ENCODE measurements at regions of chr22 and their contacts with region 1.

Region 1: GRCh38 chr22:42090596-42091454 is at the start of gene NDUFA6:
- DNase-seq: peak; percentile 100
- H3K4me3 ChIP-seq: peak within 1 kb of the TSS; percentile 69 to 87 (median 86)
- H3K27ac ChIP-seq: peak within 1 kb of the TSS; percentile 92 to 98 (median 96)
- H3K4me1 ChIP-seq: peaks cover 0 to 33% (median 24%) of the 10 kb centered on the region in 4 donors
- H3K27me3 ChIP-seq: no peaks in the 10 kb centered on the region
- CTCF ChIP-seq: peak; percentile 82 to 98 (median 94)
- EP300 ChIP-seq: no peak
- POLR2A ChIP-seq: peak; percentile 88 to 93
- total RNA-seq, gene NDUFA6: 61.8 to 104 (median 82.6) TPM

Region 2: DNA sequence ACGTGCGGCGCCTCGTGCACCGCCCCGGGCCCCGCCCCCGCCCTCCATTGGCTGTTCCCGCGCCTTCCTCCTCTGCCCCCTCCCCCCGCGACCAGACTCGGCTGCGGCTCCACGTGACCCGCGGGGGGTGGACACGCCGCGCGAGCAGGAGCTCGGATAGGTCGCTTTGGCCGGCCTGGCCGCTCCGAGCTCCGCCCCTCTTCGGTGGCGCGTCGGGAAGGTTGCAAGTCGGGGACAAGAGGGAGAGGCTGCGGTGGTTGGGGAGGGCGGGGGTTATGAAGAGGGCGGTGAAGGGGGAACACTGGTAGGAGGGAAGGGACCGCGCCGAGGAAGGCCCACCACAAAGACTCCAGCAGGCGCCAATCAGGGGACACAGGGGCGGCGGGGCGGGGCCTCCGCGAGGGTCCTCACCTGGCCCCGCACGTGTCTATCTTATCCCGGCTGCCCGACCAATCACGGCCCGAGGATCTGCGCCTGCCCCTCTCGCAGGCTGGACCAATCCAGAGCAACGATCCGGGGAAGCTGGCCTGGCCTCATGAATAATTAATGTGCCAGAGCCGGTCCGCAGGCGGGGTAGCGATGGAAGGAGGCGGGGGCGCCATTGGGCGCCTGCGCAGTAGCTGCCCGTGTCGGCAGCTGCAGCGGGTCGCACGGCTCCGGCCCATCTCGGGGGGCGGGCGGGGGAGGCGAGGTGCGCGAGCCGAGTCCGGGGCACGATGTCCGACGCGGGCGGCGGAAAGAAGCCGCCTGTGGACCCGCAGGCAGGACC is 709.3 kb before region 1 on chr22 and contains the start of gene TEF:
- intact Hi-C with region 1: no loop called
- DNase-seq: peak; percentile 100
- H3K4me3 ChIP-seq: peak within 1 kb of the TSS; percentile 62 to 90 (median 85)
- H3K27ac ChIP-seq: peak within 1 kb of the TSS; percentile 90 to 99 (median 99)
- H3K4me1 ChIP-seq: peaks cover 0 to 36% (median 28%) of the 10 kb centered on the region in 4 donors
- H3K27me3 ChIP-seq: no peaks in the 10 kb centered on the region
- CTCF ChIP-seq: no peak
- EP300 ChIP-seq: peak in 2 of 4 donors; percentile 32 to 44
- POLR2A ChIP-seq: peak; percentile 16 to 57
- total RNA-seq, gene TEF: 21.3 to 30.3 (median 24.8) TPM

Region 3: GRCh38 chr22:41697126-41697775 is 393.6 kb before region 1 on chr22:
- intact Hi-C with region 1: no loop called
- DNase-seq: peak; percentile 95
- H3K4me3 ChIP-seq: peak overlapping the region in 2 of 4 donors; percentile 28 to 31
- H3K27ac ChIP-seq: peak overlapping the region; percentile 4 to 60 (median 37)
- H3K4me1 ChIP-seq: peaks cover 0 to 20% (median 17%) of the 10 kb centered on the region in 4 donors
- H3K27me3 ChIP-seq: no peaks in the 10 kb centered on the region
- CTCF ChIP-seq: peak; percentile 85 to 99 (median 96)
- EP300 ChIP-seq: no peak
- POLR2A ChIP-seq: no peak

Region 4: DNA sequence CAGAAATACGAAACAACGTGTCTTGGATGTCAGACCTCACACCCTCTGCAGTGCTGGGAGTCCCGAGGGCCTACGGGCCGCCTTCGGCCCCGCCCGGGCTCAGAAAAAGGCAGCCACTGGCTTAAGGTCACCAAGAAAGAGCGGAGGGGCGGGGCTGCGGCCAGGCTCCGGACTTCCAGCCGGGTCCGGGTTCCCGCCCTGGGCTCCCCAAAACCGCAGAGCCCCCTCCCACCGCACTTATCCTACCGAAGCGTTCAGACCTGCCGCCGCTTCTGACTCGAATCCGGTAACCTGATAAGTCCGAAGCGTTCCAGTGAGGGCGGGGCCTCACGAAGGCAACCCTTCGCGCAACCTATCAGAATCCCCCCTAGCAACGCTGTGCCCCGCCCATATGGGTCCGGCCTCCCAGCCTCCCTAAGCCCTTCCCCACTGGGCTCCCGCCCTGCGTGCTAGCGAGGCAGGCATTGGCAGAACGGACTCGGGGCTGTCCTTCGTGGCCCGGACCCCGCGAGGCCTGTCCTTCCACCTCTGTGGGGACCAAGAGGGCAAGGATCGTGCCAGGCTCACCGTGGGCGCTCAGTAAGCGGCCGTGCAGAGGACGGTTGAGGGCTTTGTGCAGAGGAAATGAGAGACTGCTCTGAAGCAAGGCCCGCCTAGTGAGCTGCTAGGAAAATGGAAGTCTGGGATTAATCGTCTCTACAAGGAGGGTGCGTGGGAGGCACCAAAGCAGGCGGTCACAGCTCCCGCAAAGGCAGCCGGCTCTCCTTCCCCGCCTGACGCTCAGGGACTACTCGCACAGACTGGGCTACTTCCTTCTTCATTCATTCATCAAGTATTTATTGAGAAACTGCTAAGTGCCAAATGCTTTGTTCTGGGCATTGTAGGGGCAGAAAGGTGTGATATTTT is 20.1 kb before region 1 on chr22 and contains the start of gene NAGA:
- intact Hi-C with region 1: loop called (anchors 1 kb)
- DNase-seq: peak; percentile 98
- H3K4me3 ChIP-seq: peak within 1 kb of the TSS; percentile 52 to 68 (median 62)
- H3K27ac ChIP-seq: peak within 1 kb of the TSS; percentile 88 to 93 (median 90)
- H3K4me1 ChIP-seq: peaks cover 0 to 47% (median 39%) of the 10 kb centered on the region in 4 donors
- H3K27me3 ChIP-seq: no peaks in the 10 kb centered on the region
- CTCF ChIP-seq: no peak
- EP300 ChIP-seq: no peak
- POLR2A ChIP-seq: peak; percentile 73 to 91
- total RNA-seq, gene NAGA: 18.6 to 28.6 (median 21.7) TPM

Region 5: DNA sequence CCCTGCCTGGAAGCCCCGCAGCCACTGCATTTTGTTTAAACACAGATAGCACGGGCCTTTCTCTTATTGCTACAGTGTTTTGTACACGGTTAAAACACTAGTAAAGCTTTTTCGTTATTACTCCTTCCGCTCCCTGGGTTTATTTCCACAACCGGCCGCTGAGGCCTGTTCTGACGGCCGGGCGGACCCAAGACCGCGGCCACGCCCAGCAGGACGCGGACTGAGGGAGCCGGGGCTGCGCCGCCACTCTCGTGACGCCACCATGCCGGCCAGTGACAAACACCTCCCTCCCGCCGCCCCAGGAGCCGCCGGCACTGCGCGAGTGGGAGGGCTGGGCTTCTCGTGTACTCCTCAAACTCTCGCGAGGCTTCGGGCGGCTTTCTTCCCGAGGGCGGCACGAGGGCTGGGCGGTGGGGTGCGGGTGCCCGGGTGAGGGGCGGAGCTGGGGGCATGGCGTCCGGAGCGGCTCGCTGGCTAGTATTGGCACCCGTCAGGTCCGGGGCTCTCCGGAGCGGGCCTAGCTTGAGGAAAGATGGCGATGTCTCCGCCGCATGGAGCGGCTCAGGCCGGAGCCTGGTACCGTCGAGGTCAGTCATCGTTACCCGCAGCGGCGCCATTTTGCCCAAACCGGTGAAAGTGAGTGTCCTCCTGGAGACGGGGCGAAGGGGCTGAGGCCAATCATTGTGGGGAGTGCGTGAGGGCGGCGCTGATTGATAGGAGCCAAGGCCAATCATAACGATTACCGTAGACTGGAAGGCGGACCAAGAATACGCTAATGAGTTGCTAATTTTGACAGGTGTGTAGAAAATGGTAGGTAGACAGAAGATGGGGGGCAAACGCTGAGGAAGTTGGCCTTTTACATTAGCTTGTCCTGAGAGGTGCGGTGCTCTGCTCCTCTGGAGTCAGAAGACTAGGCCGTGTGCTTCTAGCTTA is 11.2 kb before region 1 on chr22 and contains the start of gene SMDT1:
- intact Hi-C with region 1: loop called (anchors 1 kb)
- DNase-seq: peak; percentile 100
- H3K4me3 ChIP-seq: peak within 1 kb of the TSS; percentile 61 to 68 (median 63)
- H3K27ac ChIP-seq: peak within 1 kb of the TSS; percentile 93 to 99 (median 98)
- H3K4me1 ChIP-seq: peaks cover 0 to 48% (median 39%) of the 10 kb centered on the region in 4 donors
- H3K27me3 ChIP-seq: no peaks in the 10 kb centered on the region
- CTCF ChIP-seq: no peak
- EP300 ChIP-seq: peak in 1 of 4 donors; percentile 44
- POLR2A ChIP-seq: peak; percentile 93 to 95
- total RNA-seq, gene SMDT1: 12.1 to 23.9 (median 21.9) TPM

Region 6: DNA sequence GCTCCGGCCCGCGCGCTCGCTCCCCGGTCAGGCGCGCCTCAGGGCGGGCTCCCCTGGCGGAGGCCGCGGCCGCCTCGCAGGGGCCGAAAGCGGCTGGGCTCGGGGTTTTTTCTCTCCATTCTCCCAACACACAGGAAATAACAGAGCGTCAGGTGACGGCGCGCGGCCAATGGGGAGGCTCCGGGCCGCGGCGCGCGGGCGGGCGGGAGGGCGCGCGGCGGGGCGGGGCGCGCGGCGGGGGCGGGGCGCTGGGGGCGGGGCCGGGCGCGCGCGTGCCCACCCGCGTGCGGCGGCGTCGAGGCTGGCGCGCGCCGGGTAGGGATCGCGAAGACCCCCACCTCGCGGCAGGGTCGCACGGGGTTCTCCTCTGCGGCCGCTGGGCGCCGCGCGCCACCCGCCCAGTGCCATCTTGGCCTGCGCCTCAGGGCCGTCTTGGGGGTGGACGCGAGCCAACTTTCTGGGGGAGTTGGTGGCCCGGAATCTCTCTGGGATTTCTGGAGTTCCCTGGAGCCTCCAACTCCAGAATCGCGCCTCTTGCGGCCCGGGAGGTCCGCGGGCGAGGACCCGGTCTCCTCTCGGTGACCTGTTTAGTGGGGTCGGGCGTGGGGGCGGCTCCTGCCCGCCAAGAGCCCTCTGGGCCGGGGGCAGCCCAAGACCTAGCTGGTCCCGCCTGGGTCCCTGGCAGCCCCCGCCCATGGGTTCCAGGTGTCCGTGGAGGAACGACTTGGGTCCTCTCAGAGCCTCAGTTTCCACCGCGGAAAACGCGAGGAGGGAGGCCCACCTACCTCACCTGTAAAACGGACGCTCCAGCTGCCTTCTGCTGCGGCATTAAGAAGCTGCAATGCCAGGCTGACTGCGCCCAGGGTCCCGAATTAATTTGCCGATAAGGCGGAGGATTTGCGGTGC is 179.9 kb after region 1 on chr22 and contains the start of gene TCF20:
- intact Hi-C with region 1: loop called (anchors 2 kb)
- DNase-seq: peak; percentile 86
- H3K4me3 ChIP-seq: peak within 1 kb of the TSS; percentile 78 to 100 (median 96)
- H3K27ac ChIP-seq: peak within 1 kb of the TSS; percentile 84 to 88 (median 85)
- H3K4me1 ChIP-seq: peaks cover 0 to 23% (median 16%) of the 10 kb centered on the region in 4 donors
- H3K27me3 ChIP-seq: no peaks in the 10 kb centered on the region
- CTCF ChIP-seq: no peak
- EP300 ChIP-seq: no peak
- POLR2A ChIP-seq: no peak
- total RNA-seq, gene TCF20: 21.6 to 31.0 (median 25.1) TPM

Region 7: GRCh38 chr22:42313804-42314581 is 223.2 kb after region 1 on chr22:
- intact Hi-C with region 1: loop called (anchors 2 kb)
- DNase-seq: peak; percentile 75
- H3K4me3 ChIP-seq: no peak overlapping the region
- H3K27ac ChIP-seq: no peak overlapping the region
- H3K4me1 ChIP-seq: peaks cover 0 to 45% (median 35%) of the 10 kb centered on the region in 4 donors
- H3K27me3 ChIP-seq: no peaks in the 10 kb centered on the region
- CTCF ChIP-seq: peak in 3 of 4 experiments; percentile 15 to 28 (median 21)
- EP300 ChIP-seq: no peak
- POLR2A ChIP-seq: no peak

Region 8: DNA sequence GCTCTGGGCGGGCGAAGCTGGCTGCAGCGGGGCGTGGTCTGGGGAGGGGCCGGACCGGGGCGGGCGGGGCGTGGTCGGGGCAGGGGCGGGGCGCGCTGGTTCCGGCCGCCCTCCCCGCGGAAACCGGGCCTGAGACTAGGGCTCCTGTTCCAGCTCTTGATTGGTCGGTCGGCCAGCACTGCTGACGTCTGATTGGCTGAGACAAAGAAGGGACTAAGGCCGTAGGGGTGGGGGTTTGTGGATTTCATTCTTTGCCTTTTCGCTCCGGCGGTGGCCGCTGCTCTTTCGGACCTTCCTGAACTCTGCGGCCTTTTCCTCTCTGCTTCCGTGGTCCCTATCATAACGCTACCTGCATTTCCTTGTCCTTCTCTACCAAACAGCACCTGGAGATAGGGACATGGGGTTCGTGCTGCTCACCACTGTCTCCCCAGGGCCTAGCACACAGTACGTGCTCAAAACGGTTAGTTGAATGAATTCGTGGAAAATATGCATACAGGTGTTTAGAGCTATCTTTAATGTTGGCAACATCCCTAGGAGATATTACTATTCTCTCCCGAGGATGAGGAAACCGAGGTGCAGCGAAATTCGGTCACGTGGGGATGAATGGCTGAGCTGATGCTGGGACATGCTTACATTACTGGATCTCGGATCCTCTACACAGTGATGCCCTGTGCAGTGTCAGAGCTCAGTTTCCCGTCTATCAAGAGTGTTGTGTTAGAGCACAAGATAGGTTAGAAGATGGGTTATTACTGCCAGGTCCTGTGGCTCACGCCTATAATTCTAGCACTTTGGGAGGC is 278.6 kb after region 1 on chr22:
- intact Hi-C with region 1: loop called (anchors 5 kb)
- DNase-seq: peak; percentile 97
- H3K4me3 ChIP-seq: peak overlapping the region; percentile 46 to 69 (median 56)
- H3K27ac ChIP-seq: peak overlapping the region; percentile 69 to 82 (median 78)
- H3K4me1 ChIP-seq: peaks cover 0 to 54% (median 50%) of the 10 kb centered on the region in 4 donors
- H3K27me3 ChIP-seq: no peaks in the 10 kb centered on the region
- CTCF ChIP-seq: no peak
- EP300 ChIP-seq: no peak
- POLR2A ChIP-seq: no peak

Region 9: GRCh38 chr22:42437488-42438292 is 346.9 kb after region 1 on chr22:
- intact Hi-C with region 1: loop called (anchors 1 kb)
- DNase-seq: peak; percentile 87
- H3K4me3 ChIP-seq: peak overlapping the region in 3 of 4 donors; percentile 30 to 45 (median 38)
- H3K27ac ChIP-seq: peak overlapping the region in 1 of 4 donors; percentile 16
- H3K4me1 ChIP-seq: peaks cover 0 to 25% (median 22%) of the 10 kb centered on the region in 4 donors
- H3K27me3 ChIP-seq: peaks cover 0 to 6% (median 4%) of the 10 kb centered on the region in 3 donors
- CTCF ChIP-seq: peak; percentile 95 to 99 (median 98)
- EP300 ChIP-seq: no peak
- POLR2A ChIP-seq: no peak

Measured in sigmoid colon (tissue), 7 donors.